Mammary epithelial cell (primary cell): ENCODE measurements at regions of chr6 and their contacts with region 1.

Region 1: DNA sequence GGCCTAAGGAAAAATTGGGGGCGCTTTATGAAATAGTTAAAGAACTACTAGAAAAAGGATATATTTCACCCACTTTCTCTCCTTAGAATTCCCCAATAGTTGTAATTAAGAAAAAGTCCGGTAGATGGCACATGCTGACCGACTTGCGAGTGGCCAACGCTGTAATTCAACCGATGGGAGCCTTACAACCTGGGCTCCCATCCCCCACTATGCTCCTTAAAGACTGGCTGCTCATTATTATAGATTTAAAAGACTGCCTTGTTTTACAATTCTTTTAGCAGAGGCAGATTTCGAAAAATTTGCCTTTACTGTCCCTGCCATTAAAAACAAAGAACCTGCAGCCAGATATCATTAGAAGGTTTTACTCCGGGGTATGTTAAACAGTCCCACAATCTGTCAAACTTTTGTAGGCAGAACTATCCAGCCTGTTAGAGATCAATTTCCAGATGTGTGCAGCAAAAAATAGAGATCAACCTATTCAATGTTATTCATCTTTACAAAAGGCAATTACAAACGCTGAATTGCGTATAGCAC is 58.5 kb upstream of the PRSS16 start:
- DNase-seq: peak; percentile 71
- H3K4me3 ChIP-seq: peak overlapping the region; percentile 56 to 74 (median 71)
- H3K27ac ChIP-seq: peak overlapping the region; percentile 44
- H3K4me1 ChIP-seq: no peaks in the 10 kb centered on the region
- H3K27me3 ChIP-seq: no peaks in the 10 kb centered on the region
- CTCF ChIP-seq: peak; percentile 38 to 68

Region 2: GRCh38 chr6:27157459-27158315 is 31.3 kb before region 1 on chr6:
- CTCF ChIA-PET with region 1: no interaction called
- dilution Hi-C with region 1: no loop called
- in situ Hi-C with region 1: no loop called
- intact Hi-C with region 1: loop called (anchors 1 kb)
- DNase-seq: peak; percentile 86
- H3K4me3 ChIP-seq: peak overlapping the region; percentile 48 to 82 (median 60)
- H3K27ac ChIP-seq: no peak overlapping the region
- H3K4me1 ChIP-seq: peaks cover 6% of the 10 kb centered on the region
- H3K27me3 ChIP-seq: no peaks in the 10 kb centered on the region
- CTCF ChIP-seq: peak; percentile 16 to 55

Region 3: DNA sequence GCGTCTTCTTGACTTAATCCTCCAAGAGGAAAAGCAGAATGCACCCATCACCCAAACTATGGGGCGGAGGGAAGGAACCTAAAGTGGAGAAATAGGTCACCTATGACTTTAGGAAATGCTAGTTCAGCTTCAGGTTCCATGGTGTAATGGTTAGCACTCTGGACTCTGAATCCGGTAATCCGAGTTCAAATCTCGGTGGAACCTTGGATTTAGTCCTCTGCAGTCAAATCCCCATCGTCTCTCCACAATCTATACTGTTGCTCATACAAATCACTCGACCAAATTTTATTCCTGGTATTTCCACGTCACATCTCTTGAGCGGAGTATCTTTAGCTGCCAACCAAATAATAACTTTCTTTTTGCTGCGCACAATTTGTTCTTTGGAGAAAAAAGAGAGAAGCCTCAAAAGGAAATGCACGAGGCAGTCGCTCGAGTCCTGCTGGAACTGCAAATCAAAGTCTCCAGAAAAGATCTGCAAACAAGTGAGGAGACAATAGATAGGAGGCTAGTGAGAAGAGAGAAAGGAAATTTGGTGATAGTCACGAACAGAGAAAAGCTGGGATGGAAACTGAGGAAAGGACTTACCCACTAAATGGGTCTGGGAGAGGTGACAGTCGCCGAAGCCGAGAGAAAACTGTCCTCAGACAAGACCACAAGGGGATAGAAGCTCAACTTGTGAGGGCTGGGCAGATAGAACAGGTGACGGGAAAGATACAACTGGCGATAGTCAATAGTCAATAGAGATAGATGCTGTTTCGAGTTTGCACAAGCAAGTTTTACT is 106.5 kb after region 1 on chr6:
- CTCF ChIA-PET with region 1: no interaction called
- dilution Hi-C with region 1: no loop called
- in situ Hi-C with region 1: no loop called
- intact Hi-C with region 1: loop called (anchors 5 kb)
- DNase-seq: peak; percentile 82
- H3K4me3 ChIP-seq: peak overlapping the region; percentile 54 to 77 (median 63)
- H3K27ac ChIP-seq: no peak overlapping the region
- H3K4me1 ChIP-seq: peaks cover 4% of the 10 kb centered on the region
- H3K27me3 ChIP-seq: no peaks in the 10 kb centered on the region
- CTCF ChIP-seq: no peak

Region 4: GRCh38 chr6:27479319-27480182 is 290.6 kb after region 1 on chr6:
- CTCF ChIA-PET with region 1: no interaction called
- dilution Hi-C with region 1: no loop called
- in situ Hi-C with region 1: no loop called
- intact Hi-C with region 1: loop called (anchors 2 kb)
- DNase-seq: peak; percentile 89
- H3K4me3 ChIP-seq: peak overlapping the region; percentile 62 to 79 (median 76)
- H3K27ac ChIP-seq: peak overlapping the region; percentile 90
- H3K4me1 ChIP-seq: peaks cover 5% of the 10 kb centered on the region
- H3K27me3 ChIP-seq: no peaks in the 10 kb centered on the region
- CTCF ChIP-seq: no peak

Region 5: DNA sequence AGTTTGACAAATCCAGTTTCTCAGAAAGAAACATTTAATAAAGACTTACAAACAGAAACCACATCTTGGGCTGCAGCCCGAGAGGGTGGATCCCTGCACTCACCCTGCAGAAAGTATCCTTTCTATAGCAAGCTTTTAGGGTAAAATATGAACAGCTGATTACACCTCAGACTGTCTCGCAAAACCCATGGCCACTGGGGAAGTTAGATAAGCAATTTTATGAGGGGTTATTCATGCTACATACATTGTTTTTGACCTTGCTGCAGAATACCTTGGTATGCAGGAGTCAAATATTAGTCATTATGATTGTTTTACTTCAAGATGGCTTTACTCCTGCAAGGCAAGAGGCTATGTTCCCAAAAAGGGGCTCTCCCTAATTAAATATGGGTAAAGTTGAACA is 596.3 kb after region 1 on chr6:
- CTCF ChIA-PET with region 1: no interaction called
- dilution Hi-C with region 1: no loop called
- in situ Hi-C with region 1: loop called in 1 of 2 experiments (anchors 10 kb)
- intact Hi-C with region 1: no loop called
- DNase-seq: no peak
- H3K4me3 ChIP-seq: no peak overlapping the region
- H3K27ac ChIP-seq: no peak overlapping the region
- H3K4me1 ChIP-seq: no peaks in the 10 kb centered on the region
- H3K27me3 ChIP-seq: no peaks in the 10 kb centered on the region
- CTCF ChIP-seq: no peak